Endothelial cell of umbilical vein (primary cell): ENCODE measurements at regions of chr3 and their contacts with region 1.

Region 1: GRCh38 chr3:44323341-44323955 is 15.1 kb upstream of the TCAIM start:
- DNase-seq: peak; percentile 80
- H3K4me3 ChIP-seq: no peak overlapping the region
- H3K27ac ChIP-seq: no peak overlapping the region
- H3K4me1 ChIP-seq: no peaks in the 10 kb centered on the region
- H3K27me3 ChIP-seq: peaks cover 0 to 3% of the 10 kb centered on the region in 2 experiments
- CTCF ChIP-seq: peak; percentile 63 to 65
- POLR2A ChIP-seq: no peak

Region 2: GRCh38 chr3:44477312-44478030 is 154.0 kb after region 1 on chr3 and contains the start of gene ZNF445:
- CTCF ChIA-PET with region 1: no interaction called
- POLR2A ChIA-PET with region 1: no interaction called
- dilution Hi-C with region 1: no loop called
- intact Hi-C with region 1: loop called (anchors 1 kb)
- DNase-seq: peak; percentile 78
- H3K4me3 ChIP-seq: peak within 1 kb of the TSS; percentile 61 to 98 (median 98)
- H3K27ac ChIP-seq: peak within 1 kb of the TSS; percentile 35
- H3K4me1 ChIP-seq: peaks cover 11% of the 10 kb centered on the region
- H3K27me3 ChIP-seq: no peaks in the 10 kb centered on the region
- CTCF ChIP-seq: no peak
- POLR2A ChIP-seq: peak; percentile 79
- total RNA-seq, gene ZNF445: 15.0 and 17.8 TPM in 2 replicates

Region 3: GRCh38 chr3:44529927-44530326 is 206.5 kb after region 1 on chr3:
- CTCF ChIA-PET with region 1: interaction called, 11 read pairs
- POLR2A ChIA-PET with region 1: no interaction called
- dilution Hi-C with region 1: no loop called
- intact Hi-C with region 1: loop called (anchors 1 kb)
- DNase-seq: peak; percentile 8
- H3K4me3 ChIP-seq: no peak overlapping the region
- H3K27ac ChIP-seq: no peak overlapping the region
- H3K4me1 ChIP-seq: no peaks in the 10 kb centered on the region
- H3K27me3 ChIP-seq: no peaks in the 10 kb centered on the region
- CTCF ChIP-seq: peak; percentile 21 to 23
- POLR2A ChIP-seq: no peak

Region 4: DNA sequence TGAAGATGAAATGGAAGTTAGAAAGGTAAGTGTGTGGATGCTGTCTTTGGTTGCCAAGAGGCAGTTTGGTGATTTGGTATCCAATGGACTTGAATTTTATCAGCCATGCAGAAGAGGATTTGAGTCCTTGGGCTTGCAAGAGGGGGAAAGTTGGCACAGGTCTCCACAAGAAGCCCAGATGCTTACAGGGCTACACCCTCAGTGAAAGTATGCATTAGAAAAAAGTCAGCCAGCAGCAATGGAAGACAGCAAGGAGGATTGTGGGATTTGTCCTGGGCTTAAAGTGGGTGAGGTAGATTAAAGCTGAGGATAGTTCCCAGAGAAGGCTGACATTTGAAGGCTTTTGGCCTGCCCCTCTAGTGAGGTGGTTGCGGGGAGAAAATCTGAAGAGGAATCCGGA is 278.3 kb after region 1 on chr3:
- CTCF ChIA-PET with region 1: no interaction called
- POLR2A ChIA-PET with region 1: no interaction called
- dilution Hi-C with region 1: no loop called
- intact Hi-C with region 1: no loop called
- DNase-seq: no peak
- H3K4me3 ChIP-seq: no peak overlapping the region
- H3K27ac ChIP-seq: no peak overlapping the region
- H3K4me1 ChIP-seq: no peaks in the 10 kb centered on the region
- H3K27me3 ChIP-seq: no peaks in the 10 kb centered on the region
- CTCF ChIP-seq: no peak
- POLR2A ChIP-seq: no peak

Region 5: GRCh38 chr3:44712455-44713075 is 389.1 kb after region 1 on chr3 and contains the start of gene ZNF502:
- CTCF ChIA-PET with region 1: no interaction called
- POLR2A ChIA-PET with region 1: no interaction called
- dilution Hi-C with region 1: no loop called
- intact Hi-C with region 1: loop called (anchors 1 kb)
- DNase-seq: peak; percentile 85
- H3K4me3 ChIP-seq: peak within 1 kb of the TSS; percentile 76 to 98 (median 86)
- H3K27ac ChIP-seq: peak within 1 kb of the TSS; percentile 58
- H3K4me1 ChIP-seq: no peaks in the 10 kb centered on the region
- H3K27me3 ChIP-seq: no peaks in the 10 kb centered on the region
- CTCF ChIP-seq: peak; percentile 35 to 43
- POLR2A ChIP-seq: no peak
- total RNA-seq, gene ZNF502: 4.1 and 4.2 TPM in 2 replicates

Region 6: GRCh38 chr3:44913868-44914468 is 590.5 kb after region 1 on chr3:
- CTCF ChIA-PET with region 1: interaction called, 8 read pairs
- POLR2A ChIA-PET with region 1: no interaction called
- dilution Hi-C with region 1: no loop called
- intact Hi-C with region 1: loop called (anchors 1 kb)
- DNase-seq: peak; percentile 70
- H3K4me3 ChIP-seq: no peak overlapping the region
- H3K27ac ChIP-seq: no peak overlapping the region
- H3K4me1 ChIP-seq: peaks cover 3% of the 10 kb centered on the region
- H3K27me3 ChIP-seq: peaks cover 0 to 8% of the 10 kb centered on the region in 2 experiments
- CTCF ChIP-seq: peak; percentile 91 to 93
- POLR2A ChIP-seq: no peak